ENCODE measurements at regions of chr10 and their contacts with region 1.

Region 1: DNA sequence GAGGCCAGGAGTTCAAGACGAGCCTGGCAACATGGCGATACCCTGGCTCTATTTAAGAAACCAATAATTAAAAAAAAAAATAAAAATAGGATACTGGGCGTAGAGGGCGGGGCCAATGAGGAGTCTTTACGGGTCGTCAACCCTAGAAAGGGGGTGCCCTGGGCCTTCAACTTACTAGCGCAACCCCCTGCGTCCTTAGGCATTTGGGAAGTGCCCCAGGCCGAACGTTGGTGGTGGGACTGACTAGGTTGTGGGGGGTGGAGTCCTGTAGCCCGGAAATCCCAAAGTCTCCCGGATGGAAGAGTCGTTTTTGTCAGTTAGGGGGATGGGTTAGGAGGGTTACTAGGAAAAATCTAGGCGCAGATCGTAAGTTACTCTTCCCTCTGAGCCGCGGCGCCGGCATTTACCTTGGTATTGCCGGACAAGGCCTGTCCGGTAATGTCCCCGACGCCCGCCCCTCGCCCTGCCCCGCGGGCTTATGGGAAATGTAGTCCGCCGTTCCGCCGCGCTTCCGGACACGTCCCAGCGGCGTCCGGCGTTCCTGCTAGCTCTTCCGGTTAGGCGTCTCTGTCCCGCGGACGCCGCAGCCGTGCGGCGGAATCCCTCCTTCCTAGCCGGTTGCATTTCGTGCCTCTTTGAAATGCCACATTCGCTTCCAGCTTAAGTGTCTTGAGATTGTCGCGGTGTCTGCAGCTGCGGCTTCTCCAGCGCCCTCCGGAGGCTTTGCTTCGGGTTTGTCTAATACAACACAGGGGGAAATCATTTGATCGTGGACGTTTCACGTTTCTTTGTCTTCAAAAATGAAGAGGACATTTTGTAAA is 1.3 kb upstream of the ACBD5 start:
- DNase-seq: peak; percentile 75 to 95 (median 85)
- ATAC-seq: peak; percentile 64
- H3K4me3 ChIP-seq: peak overlapping the region; percentile 87 to 96
- H3K4me3 Mint-ChIP-seq: peak overlapping the region; percentile 91
- H3K27ac ChIP-seq: peak overlapping the region; percentile 84 to 96
- H3K27ac Mint-ChIP-seq: peak overlapping the region; percentile 98
- H3K4me1 ChIP-seq: peaks cover 26% of the 10 kb centered on the region
- H3K4me1 Mint-ChIP-seq: peaks cover 43% of the 10 kb centered on the region
- H3K27me3 ChIP-seq: no peaks in the 10 kb centered on the region
- H3K27me3 Mint-ChIP-seq: no peaks in the 10 kb centered on the region
- CTCF ChIP-seq: no peak

Region 2: DNA sequence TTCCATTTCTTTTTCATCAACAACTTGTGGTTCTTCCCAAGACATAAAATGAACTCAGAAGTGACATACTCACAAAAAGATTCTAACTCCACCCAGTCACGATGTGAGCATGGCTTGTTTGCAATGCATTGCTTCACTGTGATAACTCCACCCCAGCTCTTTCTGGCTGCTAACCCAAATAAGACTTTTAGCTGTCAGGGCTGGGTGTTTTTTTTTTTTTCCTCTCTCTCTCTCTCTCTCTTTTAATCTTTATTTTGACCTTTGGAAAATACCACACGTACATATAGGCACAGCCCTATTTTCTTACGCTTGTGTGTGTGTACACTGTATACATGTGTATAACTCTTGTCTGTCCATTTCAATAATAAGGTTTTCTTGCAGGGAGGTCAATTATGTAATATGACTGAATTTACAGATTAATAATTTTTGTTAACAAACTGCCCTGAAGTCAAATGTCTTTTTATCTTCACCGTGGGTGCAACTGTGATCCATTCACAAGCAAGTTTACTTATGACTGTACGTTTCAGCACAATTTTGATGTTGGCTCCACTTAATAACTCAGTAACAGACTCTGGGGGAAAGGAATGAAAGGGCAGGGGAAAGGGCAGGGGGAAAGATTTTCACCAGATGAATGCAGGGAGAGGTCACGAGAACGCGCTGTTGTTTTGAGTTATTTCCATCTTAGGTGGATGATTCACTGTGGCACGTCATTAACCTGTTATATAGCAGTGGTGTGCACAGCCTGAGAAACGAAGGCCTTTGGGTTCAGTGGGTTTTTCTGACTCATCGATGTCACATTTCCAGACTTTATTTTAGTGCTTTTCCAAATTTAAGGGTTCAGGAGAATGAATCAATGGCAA is 754.6 kb before region 1 on chr10:
- CTCF ChIA-PET with region 1: no interaction called
- POLR2A ChIA-PET with region 1: no interaction called
- intact Hi-C with region 1: loop called in 1 of 2 experiments (anchors 5 kb)
- DNase-seq: peak; percentile 16 to 92 (median 69)
- ATAC-seq: peak; percentile 75
- H3K4me3 ChIP-seq: peak overlapping the region in 1 of 2 experiments; percentile 2
- H3K4me3 Mint-ChIP-seq: peak overlapping the region; percentile 66
- H3K27ac ChIP-seq: peak overlapping the region; percentile 73 to 91
- H3K27ac Mint-ChIP-seq: peak overlapping the region; percentile 97
- H3K4me1 ChIP-seq: peaks cover 66% of the 10 kb centered on the region
- H3K4me1 Mint-ChIP-seq: peaks cover 71% of the 10 kb centered on the region
- H3K27me3 ChIP-seq: no peaks in the 10 kb centered on the region
- H3K27me3 Mint-ChIP-seq: no peaks in the 10 kb centered on the region
- CTCF ChIP-seq: no peak

Region 3: DNA sequence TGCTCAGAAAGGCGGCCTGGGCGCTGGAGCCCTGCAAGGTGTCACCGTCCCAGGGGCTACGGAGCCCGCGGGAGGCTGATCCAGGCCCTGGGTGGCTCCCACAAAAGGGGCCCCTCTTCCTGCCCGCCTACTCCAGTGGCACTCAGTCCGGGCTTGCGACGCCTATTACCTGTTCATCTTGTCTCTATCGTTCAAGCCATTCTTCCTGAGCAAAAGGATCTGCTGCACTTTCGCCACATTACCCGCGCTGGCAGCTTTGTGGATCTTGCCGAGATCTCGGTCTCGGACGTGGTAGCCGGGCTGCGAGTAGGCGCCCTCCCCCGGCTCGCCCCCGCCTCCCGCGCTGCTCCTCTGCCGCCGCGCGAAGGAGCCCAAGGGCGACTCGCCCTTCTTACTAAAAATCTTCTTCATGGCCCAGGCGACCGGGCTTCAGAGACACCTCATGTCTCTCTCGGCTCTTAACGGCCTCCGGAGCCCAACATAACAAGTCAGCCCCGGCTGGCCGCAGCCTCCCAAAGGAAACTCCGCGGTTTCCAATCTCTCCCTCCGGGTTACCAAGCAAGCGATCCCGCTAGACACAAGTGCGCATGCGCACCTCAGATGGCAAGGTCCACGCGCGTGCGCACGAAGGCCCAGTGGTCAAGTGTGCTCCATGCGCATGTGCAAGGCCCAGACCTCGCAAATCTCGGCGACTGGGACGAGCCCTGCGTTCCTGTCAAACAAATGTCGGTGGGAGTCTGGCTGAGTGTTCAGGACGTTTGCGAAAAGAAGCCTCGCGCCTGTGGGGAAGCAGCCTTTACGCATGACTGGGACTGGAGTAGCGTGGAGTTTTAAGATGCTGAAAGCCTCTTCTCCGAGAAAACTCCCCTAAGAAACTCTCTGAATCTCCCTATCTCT is 141.7 kb before region 1 on chr10 and contains the start of gene ANKRD26:
- CTCF ChIA-PET with region 1: no interaction called
- POLR2A ChIA-PET with region 1: interaction called, 3 read pairs
- intact Hi-C with region 1: loop called (anchors 1 to 5 kb)
- DNase-seq: peak; percentile 88 to 99 (median 97)
- ATAC-seq: peak; percentile 53
- H3K4me3 ChIP-seq: peak within 1 kb of the TSS; percentile 84
- H3K4me3 Mint-ChIP-seq: peak within 1 kb of the TSS; percentile 93
- H3K27ac ChIP-seq: peak within 1 kb of the TSS; percentile 70 to 94
- H3K27ac Mint-ChIP-seq: peak within 1 kb of the TSS; percentile 95
- H3K4me1 ChIP-seq: peaks cover 35% of the 10 kb centered on the region
- H3K4me1 Mint-ChIP-seq: peaks cover 51% of the 10 kb centered on the region
- H3K27me3 ChIP-seq: no peaks in the 10 kb centered on the region
- H3K27me3 Mint-ChIP-seq: no peaks in the 10 kb centered on the region
- CTCF ChIP-seq: no peak
- total RNA-seq, gene ANKRD26: 4.0 to 4.7 TPM

Region 4: GRCh38 chr10:27223964-27224363 is 17.9 kb before region 1 on chr10:
- CTCF ChIA-PET with region 1: interaction called, 12 read pairs
- POLR2A ChIA-PET with region 1: interaction called, 11 read pairs
- intact Hi-C with region 1: loop called (anchors 2 kb)
- DNase-seq: peak in 8 of 9 experiments; percentile 13 to 75 (median 46)
- ATAC-seq: no peak
- H3K4me3 ChIP-seq: no peak overlapping the region
- H3K4me3 Mint-ChIP-seq: no peak overlapping the region
- H3K27ac ChIP-seq: peak overlapping the region in 1 of 2 experiments; percentile 20
- H3K27ac Mint-ChIP-seq: peak overlapping the region; percentile 52
- H3K4me1 ChIP-seq: peaks cover 17% of the 10 kb centered on the region
- H3K4me1 Mint-ChIP-seq: peaks cover 28% of the 10 kb centered on the region
- H3K27me3 ChIP-seq: no peaks in the 10 kb centered on the region
- H3K27me3 Mint-ChIP-seq: no peaks in the 10 kb centered on the region
- CTCF ChIP-seq: peak; percentile 84

Region 5: GRCh38 chr10:27285108-27285507 is 43.2 kb after region 1 on chr10:
- CTCF ChIA-PET with region 1: interaction called, 4 read pairs
- POLR2A ChIA-PET with region 1: no interaction called
- intact Hi-C with region 1: loop called in 1 of 2 experiments (anchors 5 kb)
- DNase-seq: peak in 7 of 9 experiments; percentile 6 to 71 (median 42)
- ATAC-seq: peak; percentile 73
- H3K4me3 ChIP-seq: no peak overlapping the region
- H3K4me3 Mint-ChIP-seq: no peak overlapping the region
- H3K27ac ChIP-seq: no peak overlapping the region
- H3K27ac Mint-ChIP-seq: no peak overlapping the region
- H3K4me1 ChIP-seq: no peaks in the 10 kb centered on the region
- H3K4me1 Mint-ChIP-seq: peaks cover 3% of the 10 kb centered on the region
- H3K27me3 ChIP-seq: no peaks in the 10 kb centered on the region
- H3K27me3 Mint-ChIP-seq: no peaks in the 10 kb centered on the region
- CTCF ChIP-seq: peak; percentile 59

Region 6: DNA sequence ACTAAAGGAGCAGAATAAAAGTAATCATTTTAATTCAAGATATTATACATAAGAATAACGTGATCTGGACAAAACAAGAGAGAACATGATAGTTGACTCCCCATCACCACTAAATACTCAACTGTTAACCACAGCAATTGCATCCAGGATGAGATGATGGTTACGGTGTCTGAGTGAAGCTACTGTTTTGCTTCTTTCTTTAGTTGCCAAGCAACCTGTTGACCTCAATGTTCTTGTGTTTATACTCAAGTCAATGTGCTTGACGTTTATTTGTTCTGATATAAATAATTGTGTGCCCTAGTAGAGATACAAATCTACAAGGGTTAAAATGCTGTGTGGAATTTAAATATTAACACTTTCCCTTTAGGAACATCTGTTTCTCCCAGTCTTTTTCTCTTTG is 1092.4 kb after region 1 on chr10:
- CTCF ChIA-PET with region 1: no interaction called
- POLR2A ChIA-PET with region 1: no interaction called
- intact Hi-C with region 1: loop called in 1 of 2 experiments (anchors 5 kb)
- DNase-seq: peak in 8 of 9 experiments; percentile 14 to 98 (median 50)
- ATAC-seq: peak; percentile 61
- H3K4me3 ChIP-seq: peak overlapping the region; percentile 60 to 67
- H3K4me3 Mint-ChIP-seq: peak overlapping the region; percentile 95
- H3K27ac ChIP-seq: peak overlapping the region; percentile 96 to 98
- H3K27ac Mint-ChIP-seq: peak overlapping the region; percentile 100
- H3K4me1 ChIP-seq: peaks cover 64% of the 10 kb centered on the region
- H3K4me1 Mint-ChIP-seq: peaks cover 74% of the 10 kb centered on the region
- H3K27me3 ChIP-seq: no peaks in the 10 kb centered on the region
- H3K27me3 Mint-ChIP-seq: no peaks in the 10 kb centered on the region
- CTCF ChIP-seq: no peak